GM12878 (cell line): ENCODE measurements at regions of chr10 and their contacts with region 1.

Region 1: DNA sequence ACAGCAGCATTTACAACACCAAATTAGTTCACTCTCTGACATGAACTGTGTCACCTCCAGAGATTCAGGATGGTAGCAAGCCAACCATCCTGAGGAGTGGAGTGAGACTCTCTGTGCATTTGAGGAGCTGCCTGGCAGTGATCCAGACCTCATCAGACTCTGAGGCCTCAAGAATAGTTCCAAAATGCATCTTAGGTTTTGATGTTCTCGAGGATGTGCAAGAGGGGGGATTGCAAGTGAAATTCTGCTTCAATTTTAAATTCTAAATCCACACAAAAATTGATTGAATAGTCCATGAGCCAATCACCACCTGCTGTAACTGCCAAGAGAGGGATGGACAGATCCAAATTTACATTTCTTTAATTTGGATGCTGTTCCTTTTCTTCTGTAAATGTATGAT is 49.7 kb downstream of the SLK start:
- DNase-seq: no peak
- ATAC-seq: no peak
- H3K4me3 ChIP-seq: no peak overlapping the region
- H3K27ac ChIP-seq: no peak overlapping the region
- H3K4me1 ChIP-seq: no peaks in the 10 kb centered on the region
- H3K27me3 ChIP-seq: no peaks in the 10 kb centered on the region
- CTCF ChIP-seq: no peak
- EP300 ChIP-seq: no peak
- POLR2A ChIP-seq: no peak
- RAD21 ChIP-seq: no peak

Region 2: DNA sequence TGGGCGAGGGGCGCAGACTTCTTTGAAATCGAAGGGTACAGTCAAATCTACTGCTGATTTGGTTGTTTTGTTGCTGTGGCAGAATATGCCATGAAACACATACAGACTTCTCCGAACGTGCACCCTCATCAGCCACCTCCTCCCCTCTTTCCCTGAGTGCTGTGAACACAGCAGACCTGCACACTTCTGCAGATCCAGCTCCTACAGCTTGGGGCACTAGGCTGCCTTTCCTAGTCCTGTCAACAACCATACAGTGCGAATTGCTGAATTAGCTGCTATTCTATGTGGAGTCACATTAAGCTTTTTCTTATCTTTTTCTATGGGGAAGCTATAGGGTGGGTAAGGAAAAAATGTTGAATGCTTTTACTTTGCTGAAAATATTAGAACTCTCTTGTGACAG is 11.5 kb after region 1 on chr10:
- CTCF ChIA-PET with region 1: interaction called, 12 read pairs
- POLR2A ChIA-PET with region 1: interaction called, 3 read pairs
- RAD21 ChIA-PET with region 1: interaction called, 3 read pairs
- SMC1A ChIA-PET with region 1: interaction called, 13 read pairs
- in situ Hi-C with region 1: no loop called
- intact Hi-C with region 1: no loop called
- DNase-seq: no peak
- ATAC-seq: peak; percentile 66; the same call in 2 of the 3 replicates
- H3K4me3 ChIP-seq: no peak overlapping the region
- H3K27ac ChIP-seq: no peak overlapping the region
- H3K4me1 ChIP-seq: no peaks in the 10 kb centered on the region
- H3K27me3 ChIP-seq: no peaks in the 10 kb centered on the region
- CTCF ChIP-seq: peak in 2 of 3 experiments; percentile 9 to 29; a peak in 2 of 6 replicates
- EP300 ChIP-seq: no peak
- POLR2A ChIP-seq: no peak
- RAD21 ChIP-seq: peak; percentile 11; the same call in 1 of the 2 replicates